Endothelial cell of umbilical vein (primary cell): ENCODE measurements at regions of chr9 and their contacts with region 1.

Region 1: GRCh38 chr9:127586537-127586936 is 25.5 kb upstream of the STXBP1 start:
- DNase-seq: peak; percentile 70
- H3K4me3 ChIP-seq: no peak overlapping the region
- H3K27ac ChIP-seq: no peak overlapping the region
- H3K4me1 ChIP-seq: no peaks in the 10 kb centered on the region
- H3K27me3 ChIP-seq: no peaks in the 10 kb centered on the region
- CTCF ChIP-seq: peak; percentile 80 to 88
- POLR2A ChIP-seq: no peak

Region 2: DNA sequence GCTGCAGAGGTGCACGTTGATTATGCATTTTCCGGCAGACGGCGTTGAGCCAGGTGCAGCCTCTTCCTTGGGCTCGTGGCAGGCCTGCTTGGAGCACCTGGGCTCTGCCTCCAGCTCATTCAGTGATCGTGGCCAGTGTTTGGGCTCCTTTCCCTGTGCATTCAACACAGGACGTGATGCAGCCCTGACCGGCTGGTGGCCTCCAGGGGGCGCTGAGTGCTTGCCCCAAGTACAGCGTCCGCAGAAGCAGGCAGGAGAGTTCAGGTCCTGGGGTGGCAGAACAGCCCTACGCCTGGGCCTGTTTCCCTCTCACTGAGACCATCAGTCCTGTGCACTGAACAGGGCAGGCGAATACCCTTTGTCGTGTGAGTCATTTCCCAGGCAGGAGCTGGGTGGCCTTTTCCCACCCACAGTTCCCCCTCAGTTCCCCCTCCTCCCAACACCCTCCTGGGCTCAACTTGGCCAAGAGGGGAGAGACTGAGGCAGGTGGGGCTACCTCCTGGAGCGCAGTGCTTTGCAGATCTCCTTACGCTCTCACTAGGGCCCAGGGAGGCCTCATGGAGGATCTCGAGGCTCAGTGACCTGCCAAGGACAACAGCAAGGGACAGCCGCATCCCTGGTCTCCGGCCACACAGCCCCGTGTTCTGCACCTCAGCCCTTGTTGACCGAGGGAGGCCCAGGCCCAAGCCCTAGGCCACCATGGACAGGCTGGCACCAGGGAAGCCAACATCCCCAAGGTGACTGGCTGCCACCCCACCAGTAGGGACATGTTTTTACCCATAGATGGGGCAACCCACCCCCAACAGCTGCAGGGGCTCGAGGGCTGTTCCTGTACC is 82.4 kb before region 1 on chr9:
- CTCF ChIA-PET with region 1: interaction called, 96 read pairs
- POLR2A ChIA-PET with region 1: interaction called, 6 read pairs
- dilution Hi-C with region 1: no loop called
- intact Hi-C with region 1: loop called (anchors 1 kb)
- DNase-seq: peak; percentile 75
- H3K4me3 ChIP-seq: no peak overlapping the region
- H3K27ac ChIP-seq: no peak overlapping the region
- H3K4me1 ChIP-seq: no peaks in the 10 kb centered on the region
- H3K27me3 ChIP-seq: no peaks in the 10 kb centered on the region
- CTCF ChIP-seq: peak; percentile 86 to 98
- POLR2A ChIP-seq: no peak

Region 3: DNA sequence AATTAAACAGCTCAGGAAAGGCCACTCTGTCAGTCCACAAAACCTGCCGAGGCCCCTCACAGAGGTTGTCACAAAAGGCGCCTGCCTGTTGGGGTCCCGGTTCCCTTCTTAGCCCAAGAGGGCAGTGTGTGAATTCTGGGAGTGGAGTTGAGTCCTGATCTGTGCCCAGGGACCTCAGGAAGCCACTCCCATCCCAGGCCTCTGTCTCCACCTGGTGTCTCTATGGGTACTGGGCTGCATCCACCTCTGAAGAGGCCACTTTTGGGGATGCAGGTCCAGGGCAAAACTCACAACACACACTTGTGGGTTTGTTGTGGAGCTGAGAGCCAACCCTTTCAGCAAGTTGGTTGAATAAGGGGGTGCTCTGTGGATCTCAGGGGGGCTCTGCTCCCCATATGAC is 48.7 kb before region 1 on chr9:
- CTCF ChIA-PET with region 1: interaction called, 7 read pairs
- POLR2A ChIA-PET with region 1: no interaction called
- dilution Hi-C with region 1: no loop called
- intact Hi-C with region 1: loop called (anchors 1 kb)
- DNase-seq: no peak
- H3K4me3 ChIP-seq: no peak overlapping the region
- H3K27ac ChIP-seq: no peak overlapping the region
- H3K4me1 ChIP-seq: peaks cover 31% of the 10 kb centered on the region
- H3K27me3 ChIP-seq: no peaks in the 10 kb centered on the region
- CTCF ChIP-seq: peak in 1 of 2 donors; percentile 24
- POLR2A ChIP-seq: no peak

Region 4: DNA sequence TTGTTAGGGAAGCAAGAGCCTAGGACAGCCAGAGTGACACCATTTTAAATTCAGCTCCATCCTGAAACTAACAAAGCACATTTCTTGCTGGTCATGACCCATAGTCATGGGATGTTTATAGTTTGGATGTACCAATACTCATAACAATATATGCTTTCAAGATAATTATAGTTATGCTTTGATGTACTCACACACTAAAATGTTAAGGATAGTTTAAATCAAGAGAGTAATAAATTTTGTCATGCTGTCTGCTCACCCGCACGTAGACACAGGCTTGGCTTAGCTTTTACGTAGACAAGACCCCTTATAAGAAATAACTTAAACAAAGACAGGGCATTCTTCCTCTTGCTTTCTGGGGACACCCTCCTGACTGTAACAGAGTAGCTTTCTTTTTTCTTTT is 16.7 kb after region 1 on chr9:
- CTCF ChIA-PET with region 1: interaction called, 11 read pairs
- POLR2A ChIA-PET with region 1: no interaction called
- dilution Hi-C with region 1: no loop called
- intact Hi-C with region 1: no loop called
- DNase-seq: no peak
- H3K4me3 ChIP-seq: no peak overlapping the region
- H3K27ac ChIP-seq: no peak overlapping the region
- H3K4me1 ChIP-seq: no peaks in the 10 kb centered on the region
- H3K27me3 ChIP-seq: no peaks in the 10 kb centered on the region
- CTCF ChIP-seq: no peak
- POLR2A ChIP-seq: no peak

Region 5: DNA sequence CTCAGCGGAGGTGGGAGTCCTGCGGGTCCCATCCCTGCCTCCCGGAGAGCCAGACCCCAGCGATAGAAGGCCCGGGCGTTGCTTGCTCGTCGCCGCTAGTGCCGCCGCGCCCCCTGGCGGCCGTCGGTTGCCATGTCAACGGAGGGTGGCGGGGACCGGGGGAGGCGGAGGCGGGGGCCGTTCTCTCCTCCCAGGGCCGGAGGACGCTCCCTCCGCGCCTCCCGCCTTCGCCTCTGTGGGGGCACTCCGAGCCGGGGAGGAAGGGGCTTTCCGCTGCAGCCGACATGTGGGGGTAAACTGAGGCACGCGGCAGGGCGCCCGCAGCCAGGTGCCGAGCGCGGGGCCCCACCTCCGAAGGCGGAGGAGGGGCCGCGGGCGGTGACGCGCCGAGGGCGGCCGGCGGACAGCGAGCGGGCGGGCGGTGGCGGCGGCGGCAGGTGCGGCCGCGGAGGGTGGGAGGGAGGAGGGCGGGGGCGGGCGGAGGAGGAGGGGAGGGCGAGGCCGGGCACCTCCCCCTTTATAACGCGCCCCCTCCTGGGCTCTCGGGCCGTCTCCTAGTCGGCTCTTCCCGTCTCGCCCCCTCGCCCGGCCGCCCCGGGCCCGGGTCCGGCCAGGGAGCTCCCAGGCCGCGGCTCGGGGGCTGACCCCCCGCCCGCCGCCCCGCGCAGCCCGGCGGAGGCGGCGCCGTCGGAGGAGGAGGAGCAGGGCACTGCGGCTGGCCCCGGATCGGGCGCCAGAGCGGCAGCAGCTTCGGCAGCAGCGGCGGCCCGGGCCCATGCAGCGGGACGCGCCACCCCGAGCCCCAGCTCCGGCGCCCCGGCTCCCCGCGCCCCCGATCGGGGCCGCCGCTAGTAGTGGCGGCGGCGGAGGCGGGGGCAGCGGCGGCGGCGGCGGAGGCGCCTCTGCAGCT is 198.7 kb after region 1 on chr9:
- CTCF ChIA-PET with region 1: no interaction called
- POLR2A ChIA-PET with region 1: no interaction called
- dilution Hi-C with region 1: no loop called
- intact Hi-C with region 1: loop called (anchors 1 kb)
- DNase-seq: peak; percentile 89
- H3K4me3 ChIP-seq: peak overlapping the region in 1 of 3 experiments; percentile 89
- H3K27ac ChIP-seq: peak overlapping the region; percentile 69
- H3K4me1 ChIP-seq: peaks cover 44% of the 10 kb centered on the region
- H3K27me3 ChIP-seq: no peaks in the 10 kb centered on the region
- CTCF ChIP-seq: peak; percentile 64 to 88
- POLR2A ChIP-seq: peak; percentile 24

Region 6: GRCh38 chr9:127916665-127917613 is 330.4 kb after region 1 on chr9 and contains the start of gene ST6GALNAC4:
- CTCF ChIA-PET with region 1: interaction called, 38 read pairs
- POLR2A ChIA-PET with region 1: no interaction called
- dilution Hi-C with region 1: no loop called
- intact Hi-C with region 1: loop called (anchors 1 kb)
- DNase-seq: peak; percentile 89
- H3K4me3 ChIP-seq: peak within 1 kb of the TSS; percentile 59 to 77 (median 71)
- H3K27ac ChIP-seq: peak within 1 kb of the TSS; percentile 55
- H3K4me1 ChIP-seq: peaks cover 39% of the 10 kb centered on the region
- H3K27me3 ChIP-seq: no peaks in the 10 kb centered on the region
- CTCF ChIP-seq: no peak
- POLR2A ChIP-seq: peak; percentile 82
- total RNA-seq, gene ST6GALNAC4: 38.1 and 45.9 TPM in 2 replicates